CD8-positive, alpha-beta T cell (primary cell): ENCODE measurements at regions of chr18 and their contacts with region 1.

Region 1: DNA sequence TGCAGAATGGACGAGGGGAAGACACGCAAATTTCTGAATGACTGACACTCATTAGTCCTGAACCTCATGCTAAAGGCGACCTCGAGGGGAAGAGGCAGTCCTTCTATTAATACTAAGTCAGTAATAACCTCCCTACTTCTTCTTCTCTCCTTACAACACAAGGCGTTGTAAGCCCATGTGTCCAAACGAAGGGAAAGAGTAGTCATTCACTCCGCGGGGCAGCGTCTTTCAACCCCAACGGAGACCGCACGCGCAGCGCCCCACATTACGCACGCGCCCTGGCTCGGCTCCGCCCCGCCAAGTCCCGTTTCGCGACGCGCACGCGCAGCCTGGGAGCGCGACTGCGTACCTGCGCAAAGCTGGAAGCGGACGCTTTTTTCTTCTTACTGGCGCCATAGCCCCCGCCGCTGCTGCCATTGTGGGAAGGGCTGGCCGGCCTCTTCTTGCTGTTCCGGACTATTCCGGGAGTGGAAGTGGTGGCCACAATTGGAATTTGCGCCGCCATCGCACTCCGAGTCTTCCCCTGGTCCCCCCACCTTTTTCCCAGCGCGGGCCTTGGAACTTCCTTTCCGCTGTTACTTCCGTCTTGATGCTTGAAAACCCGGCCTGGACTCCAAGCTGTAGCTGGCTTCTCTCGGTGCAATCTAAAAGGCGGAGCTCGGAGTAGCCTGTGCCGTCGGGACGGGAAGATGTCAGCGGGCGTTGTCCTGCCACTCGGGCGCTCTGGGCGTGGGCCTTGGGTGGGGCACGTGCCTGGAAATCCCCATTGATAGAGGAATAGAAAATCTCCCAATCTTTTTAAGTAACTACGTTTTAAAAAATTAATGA is at the start of gene INO80C:
- DNase-seq: peak; percentile 80 to 97 (median 92)
- ATAC-seq: peak; percentile 92
- H3K4me3 ChIP-seq: peak within 1 kb of the TSS; percentile 83 to 86
- H3K4me3 Mint-ChIP-seq: peak within 1 kb of the TSS; percentile 93
- H3K27ac ChIP-seq: peak within 1 kb of the TSS; percentile 95 to 97
- H3K27ac Mint-ChIP-seq: peak within 1 kb of the TSS; percentile 98
- H3K4me1 ChIP-seq: peaks cover 17% of the 10 kb centered on the region
- H3K4me1 Mint-ChIP-seq: peaks cover 32% of the 10 kb centered on the region
- H3K27me3 ChIP-seq: no peaks in the 10 kb centered on the region
- H3K27me3 Mint-ChIP-seq: no peaks in the 10 kb centered on the region
- CTCF ChIP-seq: no peak
- total RNA-seq, gene INO80C: 20.1 to 22.1 TPM

Region 2: GRCh38 chr18:34867520-34867919 is 630.1 kb before region 1 on chr18:
- CTCF ChIA-PET with region 1: no interaction called
- POLR2A ChIA-PET with region 1: no interaction called
- intact Hi-C with region 1: loop called in 1 of 2 experiments (anchors 10 kb)
- DNase-seq: peak in 1 of 9 experiments; percentile 6
- ATAC-seq: no peak
- H3K4me3 ChIP-seq: no peak overlapping the region
- H3K4me3 Mint-ChIP-seq: no peak overlapping the region
- H3K27ac ChIP-seq: no peak overlapping the region
- H3K27ac Mint-ChIP-seq: no peak overlapping the region
- H3K4me1 ChIP-seq: peaks cover 3% of the 10 kb centered on the region
- H3K4me1 Mint-ChIP-seq: peaks cover 16% of the 10 kb centered on the region
- H3K27me3 ChIP-seq: no peaks in the 10 kb centered on the region
- H3K27me3 Mint-ChIP-seq: no peaks in the 10 kb centered on the region
- CTCF ChIP-seq: no peak

Region 3: DNA sequence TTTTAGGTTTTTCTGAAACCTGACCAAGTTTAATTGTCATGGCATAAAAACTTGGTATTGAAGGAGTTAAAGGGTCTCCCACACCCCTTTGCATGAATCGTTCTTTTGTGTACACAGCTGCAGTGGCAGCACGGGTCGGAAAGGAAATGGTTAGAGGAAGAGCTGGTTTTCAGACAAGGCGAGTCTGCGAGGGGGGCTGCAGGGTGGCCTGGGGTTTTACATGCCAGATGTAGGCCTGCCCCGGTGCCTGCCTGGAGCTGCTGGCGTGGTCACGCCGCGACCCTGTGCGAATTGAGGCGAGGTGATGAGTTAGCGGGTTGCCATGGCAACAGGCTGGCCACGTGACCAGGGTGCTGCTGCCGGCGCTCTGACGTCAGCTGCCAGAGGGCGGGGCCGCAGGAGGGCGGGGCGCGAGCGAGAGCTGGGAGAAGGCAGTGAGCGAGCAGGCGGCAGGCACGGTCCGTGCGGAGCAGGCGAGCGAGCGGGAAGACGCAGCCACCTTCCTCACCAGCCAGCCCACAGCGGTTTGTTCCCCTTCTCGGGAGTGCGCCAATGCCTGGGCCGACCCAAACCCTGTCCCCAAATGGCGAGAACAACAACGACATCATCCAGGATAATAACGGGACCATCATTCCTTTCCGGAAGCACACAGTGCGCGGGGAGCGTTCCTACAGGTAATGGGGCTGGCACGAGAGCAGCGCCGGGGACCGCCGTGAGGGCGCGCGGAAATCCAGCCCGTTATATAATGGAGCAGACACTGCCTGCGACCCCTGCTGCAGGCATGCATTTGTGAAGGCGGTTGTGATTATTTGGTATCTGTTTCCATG is 456.4 kb before region 1 on chr18 and contains the start of gene MAPRE2:
- CTCF ChIA-PET with region 1: no interaction called
- POLR2A ChIA-PET with region 1: no interaction called
- intact Hi-C with region 1: loop called (anchors 2 kb)
- DNase-seq: peak; percentile 99 to 100 (median 100)
- ATAC-seq: peak; percentile 79
- H3K4me3 ChIP-seq: peak within 1 kb of the TSS; percentile 87 to 90
- H3K4me3 Mint-ChIP-seq: peak within 1 kb of the TSS; percentile 98
- H3K27ac ChIP-seq: peak within 1 kb of the TSS; percentile 93 to 96
- H3K27ac Mint-ChIP-seq: peak within 1 kb of the TSS; percentile 96
- H3K4me1 ChIP-seq: peaks cover 42% of the 10 kb centered on the region
- H3K4me1 Mint-ChIP-seq: peaks cover 44% of the 10 kb centered on the region
- H3K27me3 ChIP-seq: no peaks in the 10 kb centered on the region
- H3K27me3 Mint-ChIP-seq: no peaks in the 10 kb centered on the region
- CTCF ChIP-seq: no peak
- total RNA-seq, gene MAPRE2: 137 to 145 TPM

Region 4: DNA sequence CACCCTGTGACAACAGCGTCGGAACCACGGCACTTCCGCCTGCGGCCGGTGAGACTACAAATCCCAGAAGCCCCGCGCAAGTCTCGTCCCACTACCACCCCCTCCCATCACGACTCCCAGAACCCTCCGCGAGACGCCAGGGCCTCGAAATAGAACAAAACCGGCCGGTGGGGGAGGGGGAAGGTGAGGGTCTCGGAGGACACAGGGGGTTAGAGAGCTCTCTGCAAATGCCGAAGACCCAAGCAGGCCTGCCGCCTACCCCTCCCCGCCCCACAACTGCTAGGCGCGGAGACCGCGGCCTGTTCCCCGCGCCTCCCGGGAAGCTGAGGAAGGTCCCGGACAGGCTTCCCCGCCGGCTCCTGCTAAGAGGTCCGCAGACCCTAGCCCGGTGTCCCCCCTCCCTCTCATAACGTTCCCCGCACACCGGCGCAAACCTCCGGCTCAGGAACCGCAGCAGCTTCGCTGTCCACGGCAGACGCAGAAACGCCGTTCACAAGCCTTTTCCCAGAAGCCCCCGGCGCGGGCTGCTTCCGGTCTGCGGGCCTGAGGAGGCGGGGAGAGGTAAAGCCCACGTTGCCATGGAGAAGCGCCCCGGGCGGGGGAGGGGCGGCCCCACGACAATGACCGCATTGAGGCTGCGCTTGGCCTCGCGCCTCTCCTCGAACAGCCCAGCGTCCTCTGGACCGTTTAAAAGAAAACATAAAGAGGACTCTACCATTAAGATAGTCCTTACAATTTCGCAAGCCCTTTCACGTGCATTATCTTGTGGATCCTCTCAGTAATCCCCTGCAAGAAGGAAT is 153.4 kb before region 1 on chr18 and contains the start of gene ZNF24:
- CTCF ChIA-PET with region 1: no interaction called
- POLR2A ChIA-PET with region 1: interaction called, 3 read pairs
- intact Hi-C with region 1: loop called (anchors 1 to 5 kb)
- DNase-seq: peak; percentile 84 to 95 (median 92)
- ATAC-seq: peak; percentile 90
- H3K4me3 ChIP-seq: peak within 1 kb of the TSS; percentile 96 to 97
- H3K4me3 Mint-ChIP-seq: peak within 1 kb of the TSS; percentile 94
- H3K27ac ChIP-seq: peak within 1 kb of the TSS; percentile 98 to 99
- H3K27ac Mint-ChIP-seq: peak within 1 kb of the TSS; percentile 97
- H3K4me1 ChIP-seq: peaks cover 45% of the 10 kb centered on the region
- H3K4me1 Mint-ChIP-seq: peaks cover 48% of the 10 kb centered on the region
- H3K27me3 ChIP-seq: no peaks in the 10 kb centered on the region
- H3K27me3 Mint-ChIP-seq: no peaks in the 10 kb centered on the region
- CTCF ChIP-seq: no peak
- total RNA-seq, gene ZNF24: 55.3 to 57.0 TPM

Region 5: DNA sequence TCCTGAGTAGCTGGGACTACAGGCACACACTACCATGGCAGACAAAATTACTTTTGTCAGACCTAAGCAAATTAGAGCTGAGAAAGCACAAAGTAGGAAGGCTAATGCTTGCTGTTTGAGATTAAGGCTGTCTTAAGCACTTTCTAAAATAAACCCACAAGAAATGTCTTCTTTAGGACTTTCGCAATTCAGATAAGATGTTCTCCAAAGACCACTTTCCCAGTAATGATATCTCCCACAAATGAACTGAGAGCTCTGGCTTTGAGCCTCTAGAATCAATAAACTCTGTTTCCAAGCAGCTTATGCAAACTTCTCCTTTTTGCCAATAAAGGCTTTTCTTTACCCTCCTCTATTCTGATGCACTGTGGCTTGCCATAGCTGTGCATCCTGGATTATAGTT is 52.0 kb after region 1 on chr18:
- CTCF ChIA-PET with region 1: no interaction called
- POLR2A ChIA-PET with region 1: no interaction called
- intact Hi-C with region 1: no loop called
- DNase-seq: no peak
- ATAC-seq: no peak
- H3K4me3 ChIP-seq: no peak overlapping the region
- H3K4me3 Mint-ChIP-seq: no peak overlapping the region
- H3K27ac ChIP-seq: no peak overlapping the region
- H3K27ac Mint-ChIP-seq: no peak overlapping the region
- H3K4me1 ChIP-seq: no peaks in the 10 kb centered on the region
- H3K4me1 Mint-ChIP-seq: no peaks in the 10 kb centered on the region
- H3K27me3 ChIP-seq: no peaks in the 10 kb centered on the region
- H3K27me3 Mint-ChIP-seq: no peaks in the 10 kb centered on the region
- CTCF ChIP-seq: no peak

Region 6: GRCh38 chr18:35580701-35581539 is 83.3 kb after region 1 on chr18:
- CTCF ChIA-PET with region 1: no interaction called
- POLR2A ChIA-PET with region 1: interaction called, 7 read pairs
- intact Hi-C with region 1: loop called (anchors 1 to 2 kb)
- DNase-seq: peak; percentile 26 to 83 (median 59)
- ATAC-seq: peak; percentile 73
- H3K4me3 ChIP-seq: peak overlapping the region; percentile 53 to 65
- H3K4me3 Mint-ChIP-seq: peak overlapping the region; percentile 75
- H3K27ac ChIP-seq: peak overlapping the region; percentile 57 to 65
- H3K27ac Mint-ChIP-seq: peak overlapping the region; percentile 68
- H3K4me1 ChIP-seq: peaks cover 13% of the 10 kb centered on the region
- H3K4me1 Mint-ChIP-seq: peaks cover 27% of the 10 kb centered on the region
- H3K27me3 ChIP-seq: no peaks in the 10 kb centered on the region
- H3K27me3 Mint-ChIP-seq: peaks cover 14% of the 10 kb centered on the region
- CTCF ChIP-seq: no peak

Region 7: GRCh38 chr18:35683021-35683420 is 185.4 kb after region 1 on chr18:
- CTCF ChIA-PET with region 1: no interaction called
- POLR2A ChIA-PET with region 1: no interaction called
- intact Hi-C with region 1: no loop called
- DNase-seq: no peak
- ATAC-seq: no peak
- H3K4me3 ChIP-seq: no peak overlapping the region
- H3K4me3 Mint-ChIP-seq: no peak overlapping the region
- H3K27ac ChIP-seq: no peak overlapping the region
- H3K27ac Mint-ChIP-seq: no peak overlapping the region
- H3K4me1 ChIP-seq: no peaks in the 10 kb centered on the region
- H3K4me1 Mint-ChIP-seq: no peaks in the 10 kb centered on the region
- H3K27me3 ChIP-seq: no peaks in the 10 kb centered on the region
- H3K27me3 Mint-ChIP-seq: no peaks in the 10 kb centered on the region
- CTCF ChIP-seq: no peak

Region 8: GRCh38 chr18:36067055-36067957 is 569.7 kb after region 1 on chr18 and contains the start of gene RPRD1A:
- CTCF ChIA-PET with region 1: no interaction called
- POLR2A ChIA-PET with region 1: no interaction called
- intact Hi-C with region 1: loop called (anchors 2 to 10 kb)
- DNase-seq: peak; percentile 92 to 99 (median 97)
- ATAC-seq: peak; percentile 93
- H3K4me3 ChIP-seq: peak within 1 kb of the TSS; percentile 95 to 98
- H3K4me3 Mint-ChIP-seq: peak within 1 kb of the TSS; percentile 94
- H3K27ac ChIP-seq: peak within 1 kb of the TSS; percentile 88 to 89
- H3K27ac Mint-ChIP-seq: peak within 1 kb of the TSS; percentile 96
- H3K4me1 ChIP-seq: peaks cover 29% of the 10 kb centered on the region
- H3K4me1 Mint-ChIP-seq: peaks cover 46% of the 10 kb centered on the region
- H3K27me3 ChIP-seq: no peaks in the 10 kb centered on the region
- H3K27me3 Mint-ChIP-seq: peaks cover 3% of the 10 kb centered on the region
- CTCF ChIP-seq: no peak
- total RNA-seq, gene RPRD1A: 13.8 to 15.8 TPM